Activated naive CD8-positive, alpha-beta T cell treated with anti-CD3 and anti-CD28 coated beads, Interleukin-2, amount 10 ng/mL, durations not matched to agents 7 days and 5 days (primary cell): ENCODE measurements at regions of chr4 and their contacts with region 1.

Region 1: DNA sequence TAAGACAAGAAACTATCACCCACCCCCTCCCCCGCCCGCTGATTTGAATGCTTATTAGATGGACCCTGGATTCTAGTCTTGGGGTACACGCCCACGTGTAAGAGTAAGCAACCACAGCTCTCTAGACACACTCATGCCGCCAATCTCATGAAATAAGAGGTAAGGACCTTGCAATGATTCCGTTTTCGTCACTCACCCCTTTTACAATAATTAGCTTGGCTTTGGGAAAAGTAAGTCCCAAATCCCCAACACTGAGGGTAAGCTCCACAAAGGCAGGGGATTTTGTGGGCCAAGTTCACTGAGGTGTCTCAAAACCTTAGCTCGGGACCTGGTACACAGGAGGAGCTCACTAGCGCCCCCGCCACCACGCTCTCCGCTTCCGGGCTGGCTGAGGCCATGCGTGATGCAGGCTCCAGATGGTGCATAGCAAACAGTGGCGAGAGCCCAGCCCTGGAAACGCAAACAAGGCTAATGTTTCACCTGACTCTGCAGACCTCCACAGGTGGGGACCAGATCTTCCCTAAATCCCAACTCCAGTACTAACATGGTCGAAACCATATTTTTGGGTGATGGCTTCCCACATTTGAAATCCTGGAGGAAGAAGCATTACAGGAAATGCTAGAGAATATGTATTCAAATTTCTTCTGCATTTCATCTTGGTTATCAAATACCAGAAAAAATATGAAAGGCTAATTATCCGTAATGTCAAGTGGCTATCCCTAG is 4.1 kb downstream of the PLAC8 start:
- DNase-seq: peak; percentile 92
- ATAC-seq: peak; percentile 77
- H3K4me3 Mint-ChIP-seq: peak overlapping the region; percentile 97
- H3K27ac Mint-ChIP-seq: peak overlapping the region; percentile 97
- H3K4me1 Mint-ChIP-seq: peaks cover 36% of the 10 kb centered on the region
- H3K27me3 Mint-ChIP-seq: no peaks in the 10 kb centered on the region

Region 2: DNA sequence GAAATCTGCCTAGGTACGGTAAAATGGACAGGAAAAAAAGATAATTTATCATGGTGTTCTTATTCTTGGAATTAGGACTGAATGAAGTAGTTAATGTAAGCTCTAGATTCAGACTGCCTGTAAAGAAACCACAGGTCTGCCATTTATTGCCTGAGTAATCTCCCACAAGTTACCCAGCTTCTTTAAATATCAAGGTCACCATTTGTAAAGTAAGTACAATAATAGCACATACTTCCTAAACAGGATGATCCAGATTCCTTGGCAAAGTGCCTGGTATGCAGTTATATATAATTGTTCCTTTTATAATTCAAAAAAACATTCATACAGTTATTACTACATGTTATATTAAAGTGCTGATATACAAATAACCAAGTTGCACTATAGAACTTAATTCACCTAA is 1105.2 kb before region 1 on chr4:
- POLR2A ChIA-PET with region 1: no interaction called
- DNase-seq: no peak
- ATAC-seq: no peak
- H3K4me3 Mint-ChIP-seq: no peak overlapping the region
- H3K27ac Mint-ChIP-seq: no peak overlapping the region
- H3K4me1 Mint-ChIP-seq: no peaks in the 10 kb centered on the region
- H3K27me3 Mint-ChIP-seq: no peaks in the 10 kb centered on the region

Region 3: DNA sequence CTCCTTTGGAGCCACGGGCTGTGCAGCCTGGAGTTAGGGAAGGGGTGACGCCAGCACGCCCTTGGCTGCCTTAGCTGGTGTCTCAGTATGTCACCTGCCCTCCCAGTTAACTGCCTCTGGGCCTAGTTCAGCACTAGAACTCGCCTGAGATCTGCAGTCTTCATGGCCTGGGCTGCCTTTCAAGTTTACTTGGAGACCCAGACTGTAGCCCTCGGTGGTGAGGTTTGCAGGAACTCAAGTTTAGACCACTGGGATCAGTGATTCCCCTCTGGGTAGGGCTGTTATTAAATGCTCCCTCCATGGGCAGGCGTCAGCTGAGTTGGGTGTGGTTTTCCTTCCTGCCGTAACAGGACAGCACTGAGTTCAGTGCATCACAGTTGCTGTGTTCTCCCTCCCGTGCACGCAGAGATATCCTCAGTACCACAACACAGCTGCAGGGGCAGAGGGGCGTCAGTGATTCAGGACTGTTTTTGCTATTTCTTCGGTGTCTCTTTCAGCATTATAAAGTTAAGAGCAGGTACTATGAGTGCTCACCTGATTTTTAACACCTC is 26.4 kb before region 1 on chr4:
- POLR2A ChIA-PET with region 1: interaction called, 35 read pairs
- DNase-seq: peak; percentile 68
- ATAC-seq: peak; percentile 98
- H3K4me3 Mint-ChIP-seq: peak overlapping the region; percentile 43
- H3K27ac Mint-ChIP-seq: peak overlapping the region; percentile 88
- H3K4me1 Mint-ChIP-seq: peaks cover 31% of the 10 kb centered on the region
- H3K27me3 Mint-ChIP-seq: no peaks in the 10 kb centered on the region

Region 4: DNA sequence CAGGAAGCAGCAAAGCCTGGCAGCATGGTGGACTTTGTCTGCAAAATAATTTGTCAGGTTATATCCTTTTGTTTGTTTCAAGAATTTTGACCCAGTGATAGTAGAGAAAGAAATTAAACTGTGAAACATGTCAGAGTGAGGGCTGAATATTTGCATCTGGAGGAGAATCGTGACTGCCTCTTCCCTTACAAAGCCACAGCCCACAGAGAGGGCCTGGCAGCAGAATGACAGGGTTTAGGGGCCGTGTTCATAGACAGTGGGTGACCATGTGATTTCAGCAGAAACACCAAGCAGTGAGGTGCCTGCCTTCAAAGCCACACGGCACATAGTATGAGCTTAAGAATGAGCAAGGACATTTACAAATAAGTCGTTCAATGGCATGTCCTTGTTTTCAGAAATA is 28.6 kb after region 1 on chr4:
- POLR2A ChIA-PET with region 1: interaction called, 67 read pairs
- DNase-seq: peak; percentile 66
- ATAC-seq: peak; percentile 100
- H3K4me3 Mint-ChIP-seq: peak overlapping the region; percentile 63
- H3K27ac Mint-ChIP-seq: peak overlapping the region; percentile 96
- H3K4me1 Mint-ChIP-seq: peaks cover 31% of the 10 kb centered on the region
- H3K27me3 Mint-ChIP-seq: no peaks in the 10 kb centered on the region

Region 5: GRCh38 chr4:83217721-83218522 is 107.5 kb after region 1 on chr4:
- POLR2A ChIA-PET with region 1: interaction called, 252 read pairs
- DNase-seq: no peak
- ATAC-seq: peak; percentile 90
- H3K4me3 Mint-ChIP-seq: peak overlapping the region; percentile 79
- H3K27ac Mint-ChIP-seq: peak overlapping the region; percentile 89
- H3K4me1 Mint-ChIP-seq: peaks cover 76% of the 10 kb centered on the region
- H3K27me3 Mint-ChIP-seq: no peaks in the 10 kb centered on the region

Region 6: GRCh38 chr4:83252782-83253405 is 142.5 kb after region 1 on chr4:
- POLR2A ChIA-PET with region 1: interaction called, 64 read pairs
- DNase-seq: peak; percentile 53
- ATAC-seq: peak; percentile 93
- H3K4me3 Mint-ChIP-seq: no peak overlapping the region
- H3K27ac Mint-ChIP-seq: peak overlapping the region; percentile 70
- H3K4me1 Mint-ChIP-seq: peaks cover 33% of the 10 kb centered on the region
- H3K27me3 Mint-ChIP-seq: no peaks in the 10 kb centered on the region